Activated CD8-positive, alpha-beta T cell treated with anti-CD3 and anti-CD28 coated beads, Interleukin-2, amount 10 ng/mL, durations not matched to agents 7 days and 5 days (primary cell): ENCODE measurements at regions of chr16 and their contacts with region 1.

Region 1: DNA sequence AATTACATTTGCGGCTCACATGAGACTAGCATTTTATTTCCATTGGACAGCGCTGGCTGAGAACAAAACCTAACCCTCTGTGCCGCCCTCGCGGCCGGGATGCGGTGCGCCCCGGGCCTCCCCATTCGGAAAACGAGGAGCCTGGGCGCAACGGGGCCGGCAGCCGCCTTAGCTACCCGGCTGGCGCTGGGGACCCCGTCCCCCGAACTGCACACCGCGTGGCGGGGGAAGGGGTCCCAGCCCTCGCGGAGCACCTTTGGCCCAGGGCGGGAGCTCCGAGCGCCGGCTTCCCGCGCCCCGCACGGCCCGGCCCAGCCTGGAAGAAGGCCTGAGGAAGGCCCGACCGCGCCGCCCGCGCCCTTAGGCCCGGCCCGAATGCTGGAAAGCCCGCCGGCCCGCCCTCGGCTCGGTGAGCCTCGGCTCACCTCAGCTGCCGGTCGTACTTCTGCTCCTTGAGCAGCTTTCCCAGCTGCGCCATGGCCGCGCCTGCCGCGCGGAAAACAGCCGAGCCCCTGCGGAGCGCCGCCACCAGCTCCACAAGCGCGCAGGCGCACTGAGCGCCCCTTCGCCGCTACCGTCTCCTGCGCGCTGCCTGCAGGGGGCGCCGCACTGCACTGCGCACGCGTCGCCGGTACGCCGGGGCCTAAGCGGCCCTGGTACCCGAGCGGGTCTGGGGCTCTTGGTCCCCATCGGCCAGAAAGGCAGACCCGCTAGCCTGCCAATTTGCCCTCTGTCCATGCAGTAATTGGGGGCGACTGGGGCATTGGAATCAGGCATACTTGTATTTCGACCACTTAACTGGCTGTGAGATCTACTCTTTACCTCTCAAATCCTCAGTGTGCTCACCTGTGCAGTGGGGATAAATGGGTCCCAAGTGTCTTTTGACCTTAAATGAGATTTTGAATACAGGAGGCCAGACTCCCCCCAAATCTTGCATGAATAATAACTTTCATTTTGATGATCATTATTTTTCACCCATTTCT is at the start of gene NAE1:
- DNase-seq: peak; percentile 90
- ATAC-seq: peak; percentile 97
- H3K4me3 Mint-ChIP-seq: peak within 1 kb of the TSS; percentile 74
- H3K27ac Mint-ChIP-seq: peak within 1 kb of the TSS; percentile 83
- H3K4me1 Mint-ChIP-seq: peaks cover 28% of the 10 kb centered on the region
- H3K27me3 Mint-ChIP-seq: peaks cover 7% of the 10 kb centered on the region
- total RNA-seq, gene NAE1: 77.3 to 84.1 TPM

Region 2: GRCh38 chr16:66608241-66609138 is 222.2 kb before region 1 on chr16:
- CTCF ChIA-PET with region 1: interaction called, 10 read pairs
- POLR2A ChIA-PET with region 1: interaction called, 3 read pairs
- DNase-seq: peak; percentile 85
- ATAC-seq: peak; percentile 27
- H3K4me3 Mint-ChIP-seq: no peak overlapping the region
- H3K27ac Mint-ChIP-seq: peak overlapping the region; percentile 79
- H3K4me1 Mint-ChIP-seq: peaks cover 37% of the 10 kb centered on the region
- H3K27me3 Mint-ChIP-seq: no peaks in the 10 kb centered on the region

Region 3: GRCh38 chr16:66751303-66751991 is 79.3 kb before region 1 on chr16 and contains the start of gene DYNC1LI2:
- CTCF ChIA-PET with region 1: interaction called, 25 read pairs
- POLR2A ChIA-PET with region 1: interaction called, 3 read pairs
- DNase-seq: peak; percentile 84
- ATAC-seq: peak; percentile 84
- H3K4me3 Mint-ChIP-seq: peak within 1 kb of the TSS; percentile 80
- H3K27ac Mint-ChIP-seq: peak within 1 kb of the TSS; percentile 90
- H3K4me1 Mint-ChIP-seq: peaks cover 44% of the 10 kb centered on the region
- H3K27me3 Mint-ChIP-seq: peaks cover 17% of the 10 kb centered on the region
- total RNA-seq, gene DYNC1LI2: 56.5 to 63.1 TPM

Region 4: DNA sequence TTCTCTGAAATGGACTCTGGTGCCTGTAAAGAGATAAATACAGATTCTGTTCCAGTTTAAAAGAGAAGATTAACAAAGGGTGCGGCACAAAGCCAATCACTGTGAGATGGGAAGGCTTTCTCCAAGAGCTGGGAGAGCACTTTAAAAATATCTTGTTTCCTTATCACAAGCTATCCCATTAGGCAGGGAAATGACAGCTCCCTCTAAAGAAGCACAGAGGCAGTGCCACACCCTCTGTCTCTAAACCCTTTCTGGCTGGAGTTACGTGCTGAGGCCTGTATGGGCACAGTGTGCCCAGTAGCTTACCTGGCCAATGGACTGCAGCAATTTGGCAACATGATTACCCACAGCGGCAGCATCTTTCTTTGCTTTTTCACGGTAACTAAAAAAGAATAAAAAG is 20.3 kb before region 1 on chr16:
- CTCF ChIA-PET with region 1: interaction called, 25 read pairs
- POLR2A ChIA-PET with region 1: interaction called, 3 read pairs
- DNase-seq: no peak
- ATAC-seq: no peak
- H3K4me3 Mint-ChIP-seq: no peak overlapping the region
- H3K27ac Mint-ChIP-seq: no peak overlapping the region
- H3K4me1 Mint-ChIP-seq: no peaks in the 10 kb centered on the region
- H3K27me3 Mint-ChIP-seq: no peaks in the 10 kb centered on the region

Region 5: GRCh38 chr16:66850115-66850815 is 19.6 kb after region 1 on chr16:
- CTCF ChIA-PET with region 1: interaction called, 107 read pairs
- POLR2A ChIA-PET with region 1: no interaction called
- DNase-seq: no peak
- ATAC-seq: no peak
- H3K4me3 Mint-ChIP-seq: no peak overlapping the region
- H3K27ac Mint-ChIP-seq: no peak overlapping the region
- H3K4me1 Mint-ChIP-seq: peaks cover 24% of the 10 kb centered on the region
- H3K27me3 Mint-ChIP-seq: peaks cover 14% of the 10 kb centered on the region

Region 6: DNA sequence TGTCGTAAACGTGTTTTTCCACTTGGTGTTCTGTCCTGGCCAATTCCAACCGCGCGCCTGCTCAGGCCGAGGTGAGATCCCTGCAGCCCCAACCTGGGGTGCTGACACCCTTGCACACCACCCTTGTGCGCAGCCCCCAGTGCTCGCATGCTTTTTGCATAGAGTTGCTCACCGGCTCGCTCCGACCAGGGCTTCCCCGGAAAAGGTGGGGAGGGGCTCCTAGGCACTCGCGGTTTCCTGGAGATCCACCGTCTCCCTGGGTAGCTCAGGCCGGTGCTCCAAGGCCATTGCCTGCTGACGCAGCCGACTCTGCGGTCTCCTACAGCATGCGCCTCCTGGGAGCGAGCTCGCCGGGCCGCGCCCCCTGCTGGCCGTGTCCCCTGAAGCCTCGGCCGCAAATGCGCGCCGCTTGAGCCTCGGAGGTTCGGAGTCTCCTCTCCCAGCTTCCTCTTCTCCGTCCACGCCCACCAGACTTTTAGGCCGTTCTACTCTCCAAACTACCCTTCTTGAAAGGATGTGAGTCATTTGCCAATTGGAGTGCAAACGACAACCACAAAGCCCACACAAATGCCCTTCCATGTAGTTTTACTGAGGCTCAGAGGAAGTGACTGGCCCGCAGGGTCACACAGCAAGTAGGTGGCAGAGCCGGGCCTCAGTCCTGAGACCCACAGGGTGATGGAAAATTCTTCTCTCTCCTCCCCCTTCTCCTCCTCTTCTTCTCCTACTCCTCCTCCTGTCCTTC is 42.4 kb after region 1 on chr16:
- CTCF ChIA-PET with region 1: interaction called, 195 read pairs
- POLR2A ChIA-PET with region 1: interaction called, 28 read pairs
- DNase-seq: peak; percentile 98
- ATAC-seq: peak; percentile 93
- H3K4me3 Mint-ChIP-seq: peak overlapping the region; percentile 80
- H3K27ac Mint-ChIP-seq: peak overlapping the region; percentile 93
- H3K4me1 Mint-ChIP-seq: peaks cover 53% of the 10 kb centered on the region
- H3K27me3 Mint-ChIP-seq: no peaks in the 10 kb centered on the region

Region 7: DNA sequence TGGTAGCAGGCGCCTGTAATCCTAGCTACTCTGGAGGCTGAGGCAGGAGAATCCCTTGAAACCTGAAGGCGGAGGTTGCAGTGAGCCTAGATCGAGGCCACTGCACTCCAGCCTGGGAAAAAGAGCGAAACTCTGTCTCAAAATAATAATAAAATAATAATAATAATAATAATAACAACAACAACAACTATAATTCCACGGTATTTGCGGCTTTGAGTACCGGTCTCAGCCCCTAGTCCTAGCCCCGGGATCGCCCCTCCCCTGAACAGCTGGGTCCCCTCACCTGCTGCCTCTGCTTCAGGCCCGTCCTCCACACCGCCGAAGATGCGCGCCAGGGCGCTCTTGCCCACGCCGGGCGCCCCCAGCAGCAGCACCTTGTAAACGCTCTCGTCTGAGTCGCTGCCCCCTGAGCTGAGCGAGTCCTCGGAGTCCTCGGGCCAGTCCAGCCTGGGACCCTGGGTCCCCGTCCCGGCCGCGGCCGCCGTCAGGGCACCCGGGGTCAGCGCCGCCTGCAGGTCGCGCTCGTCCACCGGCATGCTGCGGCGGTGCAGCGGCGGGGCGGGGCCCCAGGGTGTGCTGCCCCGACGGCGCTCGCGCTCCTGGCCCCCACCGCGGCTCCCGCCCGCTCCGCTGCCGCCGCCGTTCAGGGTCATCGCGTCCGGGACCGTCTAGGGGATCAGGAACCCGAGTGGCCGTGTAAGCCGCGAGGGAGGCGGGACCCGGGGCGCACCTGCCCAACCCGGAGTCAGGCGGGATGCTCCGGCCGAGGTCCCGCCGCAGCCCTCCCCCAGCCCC is 94.0 kb after region 1 on chr16:
- CTCF ChIA-PET with region 1: interaction called, 27 read pairs
- POLR2A ChIA-PET with region 1: no interaction called
- DNase-seq: peak; percentile 52
- ATAC-seq: peak; percentile 75
- H3K4me3 Mint-ChIP-seq: peak overlapping the region; percentile 53
- H3K27ac Mint-ChIP-seq: no peak overlapping the region
- H3K4me1 Mint-ChIP-seq: peaks cover 22% of the 10 kb centered on the region
- H3K27me3 Mint-ChIP-seq: peaks cover 34% of the 10 kb centered on the region